ENCODE measurements at regions of chr15 and their contacts with region 1.

Region 1: GRCh38 chr15:68875377-68876116 is 54.8 kb upstream of the SPESP1 start:
- DNase-seq: peak; percentile 84
- ATAC-seq: peak; percentile 72
- H3K4me3 Mint-ChIP-seq: no peak overlapping the region
- H3K27ac Mint-ChIP-seq: no peak overlapping the region
- H3K4me1 Mint-ChIP-seq: peaks cover 4% of the 10 kb centered on the region
- H3K27me3 Mint-ChIP-seq: peaks cover 4% of the 10 kb centered on the region
- CTCF ChIP-seq: no peak

Region 2: GRCh38 chr15:68304589-68305337 is 570.8 kb before region 1 on chr15:
- CTCF ChIA-PET with region 1: no interaction called
- POLR2A ChIA-PET with region 1: no interaction called
- intact Hi-C with region 1: loop called (anchors 5 kb)
- DNase-seq: no peak
- ATAC-seq: no peak
- H3K4me3 Mint-ChIP-seq: no peak overlapping the region
- H3K27ac Mint-ChIP-seq: no peak overlapping the region
- H3K4me1 Mint-ChIP-seq: peaks cover 8% of the 10 kb centered on the region
- H3K27me3 Mint-ChIP-seq: peaks cover 3% of the 10 kb centered on the region
- CTCF ChIP-seq: no peak

Region 3: GRCh38 chr15:68559345-68560310 is 315.9 kb before region 1 on chr15:
- CTCF ChIA-PET with region 1: interaction called, 62 read pairs
- POLR2A ChIA-PET with region 1: no interaction called
- intact Hi-C with region 1: loop called (anchors 1 kb)
- DNase-seq: peak; percentile 78
- ATAC-seq: peak; percentile 95
- H3K4me3 Mint-ChIP-seq: peak overlapping the region; percentile 83
- H3K27ac Mint-ChIP-seq: no peak overlapping the region
- H3K4me1 Mint-ChIP-seq: peaks cover 23% of the 10 kb centered on the region
- H3K27me3 Mint-ChIP-seq: peaks cover 28% of the 10 kb centered on the region
- CTCF ChIP-seq: peak; percentile 98

Region 4: GRCh38 chr15:68730471-68730919 is 145.1 kb before region 1 on chr15:
- CTCF ChIA-PET with region 1: interaction called, 15 read pairs
- POLR2A ChIA-PET with region 1: no interaction called
- intact Hi-C with region 1: loop called (anchors 1 kb)
- DNase-seq: no peak
- ATAC-seq: no peak
- H3K4me3 Mint-ChIP-seq: no peak overlapping the region
- H3K27ac Mint-ChIP-seq: no peak overlapping the region
- H3K4me1 Mint-ChIP-seq: peaks cover 21% of the 10 kb centered on the region
- H3K27me3 Mint-ChIP-seq: peaks cover 2% of the 10 kb centered on the region
- CTCF ChIP-seq: no peak

Region 5: GRCh38 chr15:68774120-68774519 is 101.4 kb before region 1 on chr15:
- CTCF ChIA-PET with region 1: no interaction called
- POLR2A ChIA-PET with region 1: no interaction called
- intact Hi-C with region 1: no loop called
- DNase-seq: no peak
- ATAC-seq: no peak
- H3K4me3 Mint-ChIP-seq: no peak overlapping the region
- H3K27ac Mint-ChIP-seq: no peak overlapping the region
- H3K4me1 Mint-ChIP-seq: no peaks in the 10 kb centered on the region
- H3K27me3 Mint-ChIP-seq: no peaks in the 10 kb centered on the region
- CTCF ChIP-seq: no peak

Region 6: GRCh38 chr15:68820295-68821189 is 55.0 kb before region 1 on chr15 and contains the start of gene ANP32A:
- CTCF ChIA-PET with region 1: no interaction called
- POLR2A ChIA-PET with region 1: no interaction called
- intact Hi-C with region 1: loop called (anchors 1 kb)
- DNase-seq: peak; percentile 99
- ATAC-seq: peak; percentile 72
- H3K4me3 Mint-ChIP-seq: peak within 1 kb of the TSS; percentile 97
- H3K27ac Mint-ChIP-seq: peak within 1 kb of the TSS; percentile 97
- H3K4me1 Mint-ChIP-seq: peaks cover 32% of the 10 kb centered on the region
- H3K27me3 Mint-ChIP-seq: no peaks in the 10 kb centered on the region
- CTCF ChIP-seq: no peak
- total RNA-seq, gene ANP32A: 199 and 218 TPM in 2 replicates

Region 7: GRCh38 chr15:68862415-68862814 is 13.1 kb before region 1 on chr15:
- CTCF ChIA-PET with region 1: no interaction called
- POLR2A ChIA-PET with region 1: no interaction called
- intact Hi-C with region 1: no loop called
- DNase-seq: no peak
- ATAC-seq: no peak
- H3K4me3 Mint-ChIP-seq: no peak overlapping the region
- H3K27ac Mint-ChIP-seq: no peak overlapping the region
- H3K4me1 Mint-ChIP-seq: no peaks in the 10 kb centered on the region
- H3K27me3 Mint-ChIP-seq: peaks cover 9% of the 10 kb centered on the region
- CTCF ChIP-seq: no peak

Measured in activated B cell treated with CpG ODN at 0.5 μM for 24 hours (primary cell).